Ovary (tissue), 10 donors: ENCODE measurements at regions of chr13 and their contacts with region 1.

Region 1: GRCh38 chr13:63671296-63671695 is 2255.6 kb upstream of the PCDH20 start:
- DNase-seq: no peak
- H3K4me3 ChIP-seq: no peak overlapping the region
- H3K27ac ChIP-seq: no peak overlapping the region
- H3K4me1 ChIP-seq: no peaks in the 10 kb centered on the region
- H3K27me3 ChIP-seq: no peaks in the 10 kb centered on the region
- CTCF ChIP-seq: no peak
- EP300 ChIP-seq: no peak
- POLR2A ChIP-seq: no peak

Region 2: DNA sequence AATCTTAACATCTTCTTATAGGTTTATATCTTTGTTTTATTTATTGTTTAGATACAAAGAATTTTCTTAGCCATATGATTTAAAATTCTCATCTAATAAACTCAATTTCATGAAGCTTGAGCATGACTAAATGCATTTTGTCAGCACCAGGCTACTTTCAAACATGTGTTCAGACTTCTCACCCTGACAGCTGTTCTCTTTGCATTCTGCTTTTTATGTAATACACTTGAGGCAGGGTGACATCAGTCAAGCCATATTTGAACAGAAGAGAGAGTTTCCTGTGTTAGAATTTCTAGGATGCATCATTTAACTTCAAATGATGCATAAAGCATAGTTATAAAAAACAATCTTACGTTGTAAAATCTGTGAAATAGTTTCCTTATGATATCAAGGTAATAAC is 960.5 kb before region 1 on chr13:
- intact Hi-C with region 1: no loop called
- DNase-seq: no peak
- H3K4me3 ChIP-seq: no peak overlapping the region
- H3K27ac ChIP-seq: no peak overlapping the region
- H3K4me1 ChIP-seq: no peaks in the 10 kb centered on the region
- H3K27me3 ChIP-seq: no peaks in the 10 kb centered on the region
- CTCF ChIP-seq: no peak
- EP300 ChIP-seq: no peak
- POLR2A ChIP-seq: no peak

Region 3: DNA sequence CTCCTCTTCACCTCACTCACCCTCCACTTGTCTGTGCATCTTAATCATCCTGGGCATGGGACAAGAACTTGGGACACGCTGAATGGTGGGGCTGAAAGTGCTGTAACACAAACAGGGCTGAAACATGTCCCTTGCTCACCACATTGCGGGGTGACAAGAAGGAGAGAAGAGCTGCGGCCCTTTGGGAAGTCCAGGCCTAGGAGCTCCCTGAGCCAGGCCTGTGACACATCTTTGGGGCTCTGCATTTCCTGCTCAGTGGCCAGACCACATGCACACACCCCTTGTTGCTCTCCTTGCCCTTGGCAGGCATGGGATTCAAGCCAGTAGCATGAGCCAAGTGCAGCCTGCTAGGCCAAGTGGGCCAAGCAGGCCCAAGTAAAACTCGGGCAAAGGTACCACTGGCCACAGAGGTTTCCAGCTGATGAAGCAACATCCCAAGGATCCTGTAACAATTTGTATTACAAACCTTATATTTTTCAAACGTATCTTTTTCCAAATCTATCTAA is 871.3 kb before region 1 on chr13:
- intact Hi-C with region 1: no loop called
- DNase-seq: no peak
- H3K4me3 ChIP-seq: no peak overlapping the region
- H3K27ac ChIP-seq: no peak overlapping the region
- H3K4me1 ChIP-seq: no peaks in the 10 kb centered on the region
- H3K27me3 ChIP-seq: no peaks in the 10 kb centered on the region
- CTCF ChIP-seq: no peak
- EP300 ChIP-seq: no peak
- POLR2A ChIP-seq: no peak

Region 4: GRCh38 chr13:63044589-63045313 is 626.5 kb before region 1 on chr13:
- intact Hi-C with region 1: loop called in 1 of 4 experiments (anchors 5 kb)
- DNase-seq: no peak
- H3K4me3 ChIP-seq: no peak overlapping the region
- H3K27ac ChIP-seq: no peak overlapping the region
- H3K4me1 ChIP-seq: no peaks in the 10 kb centered on the region
- H3K27me3 ChIP-seq: no peaks in the 10 kb centered on the region
- CTCF ChIP-seq: no peak
- EP300 ChIP-seq: no peak
- POLR2A ChIP-seq: no peak

Region 5: DNA sequence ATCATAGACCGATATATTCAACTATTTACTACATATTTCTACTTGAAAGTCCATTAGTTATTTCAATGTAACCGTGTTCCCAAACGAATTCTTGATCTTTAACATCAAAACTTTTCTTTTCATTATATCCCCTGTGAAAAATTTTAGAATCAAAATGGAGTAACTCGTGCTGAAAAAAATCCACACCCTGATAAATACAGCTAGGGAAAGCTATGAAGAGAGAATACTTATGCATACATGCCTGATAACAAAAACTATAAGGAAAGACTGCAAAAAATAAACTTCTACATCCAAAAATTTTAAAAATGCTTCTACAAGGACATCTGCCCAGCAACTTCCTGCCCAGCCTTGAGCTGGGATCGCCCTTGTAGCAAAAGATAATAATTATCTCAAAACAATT is 202.6 kb after region 1 on chr13:
- intact Hi-C with region 1: no loop called
- DNase-seq: no peak
- H3K4me3 ChIP-seq: no peak overlapping the region
- H3K27ac ChIP-seq: no peak overlapping the region
- H3K4me1 ChIP-seq: no peaks in the 10 kb centered on the region
- H3K27me3 ChIP-seq: no peaks in the 10 kb centered on the region
- CTCF ChIP-seq: no peak
- EP300 ChIP-seq: no peak
- POLR2A ChIP-seq: no peak

Region 6: DNA sequence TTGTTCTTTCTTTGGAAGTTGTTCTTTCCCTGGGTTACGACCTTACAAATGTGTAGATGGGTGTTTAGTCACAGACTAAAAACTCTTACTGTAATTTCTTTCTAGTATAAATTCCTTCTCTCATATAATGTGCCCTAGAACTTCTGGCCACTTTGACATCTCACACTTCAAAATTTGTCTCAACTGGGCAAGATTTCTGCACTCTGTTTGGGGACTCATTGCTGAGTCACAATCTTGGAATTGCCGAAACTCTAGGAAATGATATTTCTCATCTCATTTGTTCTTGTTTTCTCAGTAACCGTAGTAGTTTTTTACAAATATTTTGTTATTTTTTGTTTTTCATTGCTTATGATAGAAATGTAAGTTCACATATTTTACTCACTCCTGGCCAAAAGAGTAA is 267.6 kb after region 1 on chr13:
- intact Hi-C with region 1: no loop called
- DNase-seq: no peak
- H3K4me3 ChIP-seq: no peak overlapping the region
- H3K27ac ChIP-seq: no peak overlapping the region
- H3K4me1 ChIP-seq: no peaks in the 10 kb centered on the region
- H3K27me3 ChIP-seq: no peaks in the 10 kb centered on the region
- CTCF ChIP-seq: no peak
- EP300 ChIP-seq: no peak
- POLR2A ChIP-seq: no peak